IMR-90 (cell line): ENCODE measurements at regions of chrX and their contacts with region 1.

Region 1: DNA sequence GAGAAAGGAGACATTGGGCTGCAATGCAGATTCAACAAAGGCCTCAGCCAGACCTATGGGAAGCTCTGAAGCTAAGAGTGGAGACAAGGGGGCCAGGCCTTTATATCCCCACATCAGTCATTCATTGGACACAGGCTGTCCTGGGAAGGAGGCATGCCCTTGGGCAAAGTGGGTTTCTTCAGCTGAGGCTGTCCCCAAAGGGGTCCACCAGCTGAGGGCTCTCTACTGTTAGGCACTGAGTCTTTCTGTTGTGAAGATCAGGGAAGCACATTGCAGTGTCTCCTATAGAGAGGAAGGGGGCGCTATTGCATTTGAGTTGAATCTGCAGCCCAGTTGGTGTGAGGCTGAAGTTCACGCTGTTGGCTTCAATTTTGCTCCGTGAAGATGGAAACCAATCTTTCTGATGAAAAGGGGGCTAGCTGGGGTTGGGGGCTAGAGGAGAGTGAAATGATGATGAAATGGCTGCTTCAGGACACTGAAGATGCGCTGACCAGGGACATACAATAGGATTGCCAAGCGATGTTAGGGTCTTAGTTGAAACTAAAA is 48.0 kb downstream of the SLC25A5 start:
- DNase-seq: peak; percentile 69
- ATAC-seq: peak; percentile 91
- H3K4me3 ChIP-seq: no peak overlapping the region
- H3K27ac ChIP-seq: no peak overlapping the region
- H3K4me1 ChIP-seq: no peaks in the 10 kb centered on the region
- H3K27me3 ChIP-seq: no peaks in the 10 kb centered on the region
- CTCF ChIP-seq: peak; percentile 82
- POLR2A ChIP-seq: no peak
- RAD21 ChIP-seq: peak; percentile 85

Region 2: DNA sequence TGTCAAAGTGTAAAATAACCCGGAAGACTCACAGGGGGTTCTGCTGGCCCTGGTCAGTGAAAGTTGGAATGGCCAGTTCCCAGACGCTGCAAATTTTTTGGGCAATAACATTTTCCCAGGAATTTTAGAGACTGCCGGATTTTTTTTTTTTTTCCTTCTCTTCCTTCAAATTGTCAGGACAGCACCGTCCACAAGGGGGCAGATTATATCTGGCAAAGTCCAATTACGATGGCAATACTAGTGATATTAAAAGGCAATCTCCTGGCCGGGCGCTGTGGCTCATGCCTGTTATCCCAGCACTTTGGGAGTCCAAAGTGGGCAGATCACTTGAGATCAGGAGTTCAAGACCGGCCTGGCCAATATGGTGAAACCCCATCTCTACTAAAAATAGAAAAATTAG is 27.5 kb before region 1 on chrX:
- CTCF ChIA-PET with region 1: interaction called, 33 read pairs
- POLR2A ChIA-PET with region 1: no interaction called
- dilution Hi-C with region 1: no loop called
- in situ Hi-C with region 1: no loop called
- intact Hi-C with region 1: loop called (anchors 1 kb)
- DNase-seq: peak; percentile 51
- ATAC-seq: peak; percentile 67
- H3K4me3 ChIP-seq: no peak overlapping the region
- H3K27ac ChIP-seq: no peak overlapping the region
- H3K4me1 ChIP-seq: no peaks in the 10 kb centered on the region
- H3K27me3 ChIP-seq: no peaks in the 10 kb centered on the region
- CTCF ChIP-seq: peak; percentile 67
- POLR2A ChIP-seq: no peak
- RAD21 ChIP-seq: peak; percentile 65

Region 3: DNA sequence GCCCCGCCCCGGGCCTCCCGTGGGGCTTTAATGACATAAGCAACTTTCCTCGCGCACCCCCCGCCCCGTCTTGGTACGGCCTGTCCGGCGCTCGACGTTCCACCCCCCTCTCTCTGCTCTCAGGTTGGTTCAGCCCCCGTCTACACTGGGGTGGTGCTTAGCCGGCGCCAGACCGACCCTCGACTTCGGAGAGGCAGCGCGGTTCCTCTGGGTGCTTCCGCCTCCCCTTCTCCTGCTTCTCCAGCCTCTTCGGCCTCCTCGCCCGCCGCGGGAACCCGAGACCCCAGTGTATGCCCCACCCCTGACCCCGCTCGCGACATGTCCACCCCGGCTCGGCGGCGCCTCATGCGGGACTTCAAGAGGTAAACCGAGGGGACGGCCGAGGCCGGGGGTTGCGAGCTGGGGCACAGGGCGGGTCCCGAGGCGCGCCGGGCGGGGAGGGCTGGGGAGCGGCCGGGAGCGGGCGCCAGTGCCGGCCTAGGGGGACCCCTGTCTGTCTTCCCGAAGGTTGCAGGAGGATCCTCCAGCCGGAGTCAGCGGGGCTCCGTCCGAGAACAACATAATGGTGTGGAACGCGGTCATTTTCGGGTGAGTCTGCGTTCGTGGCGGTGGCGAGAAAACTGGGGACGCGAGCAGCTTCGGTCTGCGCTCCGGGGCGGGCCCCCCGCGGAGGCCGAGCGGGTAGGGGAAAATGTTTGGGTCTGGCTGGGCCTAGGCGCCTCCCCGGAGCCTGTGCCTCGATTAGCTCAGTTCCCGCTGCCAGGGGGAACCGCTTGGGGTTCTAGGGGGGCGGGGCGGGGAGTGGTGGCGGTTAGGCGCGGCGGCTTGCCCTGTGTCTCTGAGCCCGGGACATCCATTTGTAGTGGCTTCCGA is 58.4 kb after region 1 on chrX and contains the start of gene UBE2A:
- CTCF ChIA-PET with region 1: interaction called, 3 read pairs
- POLR2A ChIA-PET with region 1: no interaction called
- dilution Hi-C with region 1: no loop called
- in situ Hi-C with region 1: no loop called
- intact Hi-C with region 1: loop called (anchors 1 kb)
- DNase-seq: peak; percentile 87
- ATAC-seq: peak; percentile 95
- H3K4me3 ChIP-seq: peak within 1 kb of the TSS; percentile 97
- H3K27ac ChIP-seq: peak within 1 kb of the TSS; percentile 87
- H3K4me1 ChIP-seq: peaks cover 2% of the 10 kb centered on the region
- H3K27me3 ChIP-seq: no peaks in the 10 kb centered on the region
- CTCF ChIP-seq: peak; percentile 38
- POLR2A ChIP-seq: peak; percentile 96
- RAD21 ChIP-seq: peak; percentile 30; the same call in 1 of the 2 replicates
- total RNA-seq, gene UBE2A: 12.9 and 20.3 TPM in 2 replicates

Region 4: GRCh38 chrX:119784747-119785446 is 268.7 kb after region 1 on chrX:
- CTCF ChIA-PET with region 1: no interaction called
- POLR2A ChIA-PET with region 1: no interaction called
- dilution Hi-C with region 1: no loop called
- in situ Hi-C with region 1: no loop called
- intact Hi-C with region 1: loop called (anchors 5 kb)
- DNase-seq: peak; percentile 23
- ATAC-seq: peak; percentile 72; the same call in 1 of the 2 replicates
- H3K4me3 ChIP-seq: no peak overlapping the region
- H3K27ac ChIP-seq: no peak overlapping the region
- H3K4me1 ChIP-seq: 0 out of 2 replicates have a peak, but pooled peaks cover 2% of the 10 kb centered on the region
- H3K27me3 ChIP-seq: no peaks in the 10 kb centered on the region
- CTCF ChIP-seq: peak; percentile 42
- POLR2A ChIP-seq: no peak
- RAD21 ChIP-seq: peak; percentile 27; the same call in 1 of the 2 replicates